ENCODE measurements at regions of chr6 and their contacts with region 1.

Region 1: DNA sequence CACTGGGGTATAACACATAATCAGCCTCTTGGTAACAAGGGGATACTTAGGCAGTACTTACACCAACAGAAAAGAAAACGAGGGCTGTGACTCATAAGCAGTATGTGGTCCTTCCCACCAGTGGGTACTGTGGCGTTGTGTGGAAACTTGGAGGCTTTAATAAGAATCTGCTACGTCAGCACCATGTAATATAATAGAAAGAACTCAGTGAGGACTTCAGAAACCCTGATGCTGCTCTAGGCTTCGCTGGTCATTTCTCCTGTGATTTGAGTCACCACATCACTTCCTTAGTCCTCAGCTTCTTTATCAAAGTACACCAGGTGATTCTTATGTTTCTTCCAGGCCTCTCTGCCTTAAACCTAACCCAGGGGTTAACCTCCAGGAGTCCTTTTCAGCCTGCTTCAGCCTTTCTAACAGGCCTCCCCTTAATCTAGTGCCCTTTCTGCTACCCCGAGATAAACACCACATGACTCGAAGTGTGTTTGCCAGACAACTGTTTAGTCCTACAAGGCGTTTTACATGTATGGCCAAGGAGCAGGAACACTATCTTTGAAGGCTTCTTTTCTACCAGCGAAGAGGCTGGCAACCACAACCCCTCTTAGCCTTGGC is 68.5 kb downstream of the FYN start:
- DNase-seq: peak; percentile 67
- H3K4me3 Mint-ChIP-seq: peak overlapping the region; percentile 74
- H3K27ac Mint-ChIP-seq: peak overlapping the region; percentile 98
- H3K4me1 Mint-ChIP-seq: peaks cover 84% of the 10 kb centered on the region
- H3K27me3 Mint-ChIP-seq: no peaks in the 10 kb centered on the region

Region 2: DNA sequence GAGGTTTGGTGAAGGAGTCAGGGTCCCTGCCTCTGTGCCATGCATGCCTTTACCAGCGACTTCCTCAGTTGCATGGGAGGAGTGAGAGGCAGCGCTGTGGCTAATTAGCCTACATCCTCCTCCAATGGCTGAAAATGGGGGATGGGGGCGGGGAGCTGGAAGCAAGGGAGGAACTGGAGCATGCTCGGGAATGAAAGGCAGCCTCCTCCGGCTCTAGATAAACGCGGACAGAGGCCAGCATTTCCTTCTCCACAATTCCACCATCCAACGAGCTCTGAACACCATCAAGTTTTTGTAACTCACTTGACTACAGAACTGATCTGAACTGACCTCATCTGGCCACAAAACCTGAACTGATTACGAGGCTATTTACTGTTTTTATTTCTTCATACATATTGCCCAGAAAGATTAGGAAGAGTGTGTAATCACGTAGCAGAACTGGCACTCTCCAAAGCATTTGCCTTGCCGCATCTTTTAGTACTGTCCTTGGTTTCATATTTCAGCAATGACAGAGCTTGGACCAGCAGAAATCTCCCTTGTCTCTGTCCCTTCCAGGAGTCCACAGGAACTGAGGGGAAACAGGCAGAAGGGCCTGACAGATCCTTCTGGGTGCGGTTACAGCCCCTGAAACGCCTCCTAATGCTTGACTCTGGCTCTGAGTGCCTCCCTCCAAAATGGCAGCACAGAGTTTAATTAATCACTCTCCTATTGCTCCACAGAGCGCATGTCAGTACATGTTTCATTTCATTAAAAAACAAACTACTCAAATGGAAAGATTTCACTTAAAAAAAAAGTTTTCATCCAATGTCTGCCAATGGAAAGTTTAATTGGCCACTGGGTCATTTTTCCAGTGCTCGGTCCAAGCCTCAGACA is 140.8 kb before region 1 on chr6:
- intact Hi-C with region 1: no loop called
- DNase-seq: no peak
- H3K4me3 Mint-ChIP-seq: no peak overlapping the region
- H3K27ac Mint-ChIP-seq: no peak overlapping the region
- H3K4me1 Mint-ChIP-seq: no peaks in the 10 kb centered on the region
- H3K27me3 Mint-ChIP-seq: no peaks in the 10 kb centered on the region

Region 3: DNA sequence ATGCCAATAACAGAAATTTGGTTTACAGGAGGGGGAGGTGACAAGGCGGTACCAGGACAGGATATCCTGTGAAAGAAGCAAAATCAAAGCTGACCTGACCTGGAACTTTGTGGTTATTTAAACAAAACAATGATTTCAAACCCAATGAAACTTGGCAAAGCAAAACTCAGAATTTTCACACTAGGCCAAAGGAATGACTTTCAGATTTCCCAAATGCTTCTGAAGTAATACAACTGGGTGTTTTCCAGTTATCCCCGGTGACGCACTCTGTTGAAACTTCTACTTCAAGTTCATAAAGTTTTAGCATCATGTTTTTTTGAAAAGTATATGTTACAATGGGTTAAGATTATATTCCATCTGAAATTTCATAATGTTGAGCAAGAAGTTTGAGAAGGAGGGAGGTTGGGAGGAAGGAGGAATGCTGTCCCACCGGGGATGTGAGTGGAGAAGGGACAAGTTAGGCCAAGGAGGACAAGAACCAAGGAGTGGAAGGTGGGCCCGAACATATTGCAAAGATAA is 120.9 kb before region 1 on chr6:
- intact Hi-C with region 1: no loop called
- DNase-seq: no peak
- H3K4me3 Mint-ChIP-seq: no peak overlapping the region
- H3K27ac Mint-ChIP-seq: peak overlapping the region; percentile 68
- H3K4me1 Mint-ChIP-seq: peaks cover 31% of the 10 kb centered on the region
- H3K27me3 Mint-ChIP-seq: no peaks in the 10 kb centered on the region

Region 4: DNA sequence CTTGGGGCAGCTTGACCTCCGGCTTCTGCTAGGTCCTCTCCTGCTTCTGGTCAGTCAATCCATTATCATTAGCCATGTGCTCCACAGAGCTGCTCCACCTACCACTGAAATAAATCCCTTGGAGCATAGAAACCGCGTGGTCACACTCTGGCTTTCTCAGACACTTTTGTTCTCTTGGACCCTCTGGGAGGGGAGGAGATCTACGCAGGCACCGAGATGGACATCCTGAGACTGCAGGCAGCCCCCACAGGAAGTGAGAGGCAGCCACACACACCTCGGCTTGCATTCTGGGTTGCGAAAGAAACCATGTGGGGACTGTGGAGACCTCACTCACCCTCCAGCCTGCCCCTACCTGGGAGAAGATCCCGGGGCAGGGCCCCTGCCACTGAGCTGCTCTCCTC is 11.0 kb before region 1 on chr6:
- intact Hi-C with region 1: loop called (anchors 1 kb)
- DNase-seq: no peak
- H3K4me3 Mint-ChIP-seq: peak overlapping the region; percentile 37
- H3K27ac Mint-ChIP-seq: peak overlapping the region; percentile 75
- H3K4me1 Mint-ChIP-seq: peaks cover 75% of the 10 kb centered on the region
- H3K27me3 Mint-ChIP-seq: no peaks in the 10 kb centered on the region

Region 5: GRCh38 chr6:111846492-111847409 is 42.0 kb after region 1 on chr6:
- intact Hi-C with region 1: loop called (anchors 1 kb)
- DNase-seq: peak; percentile 35
- H3K4me3 Mint-ChIP-seq: peak overlapping the region; percentile 65
- H3K27ac Mint-ChIP-seq: no peak overlapping the region
- H3K4me1 Mint-ChIP-seq: peaks cover 30% of the 10 kb centered on the region
- H3K27me3 Mint-ChIP-seq: no peaks in the 10 kb centered on the region

Region 6: DNA sequence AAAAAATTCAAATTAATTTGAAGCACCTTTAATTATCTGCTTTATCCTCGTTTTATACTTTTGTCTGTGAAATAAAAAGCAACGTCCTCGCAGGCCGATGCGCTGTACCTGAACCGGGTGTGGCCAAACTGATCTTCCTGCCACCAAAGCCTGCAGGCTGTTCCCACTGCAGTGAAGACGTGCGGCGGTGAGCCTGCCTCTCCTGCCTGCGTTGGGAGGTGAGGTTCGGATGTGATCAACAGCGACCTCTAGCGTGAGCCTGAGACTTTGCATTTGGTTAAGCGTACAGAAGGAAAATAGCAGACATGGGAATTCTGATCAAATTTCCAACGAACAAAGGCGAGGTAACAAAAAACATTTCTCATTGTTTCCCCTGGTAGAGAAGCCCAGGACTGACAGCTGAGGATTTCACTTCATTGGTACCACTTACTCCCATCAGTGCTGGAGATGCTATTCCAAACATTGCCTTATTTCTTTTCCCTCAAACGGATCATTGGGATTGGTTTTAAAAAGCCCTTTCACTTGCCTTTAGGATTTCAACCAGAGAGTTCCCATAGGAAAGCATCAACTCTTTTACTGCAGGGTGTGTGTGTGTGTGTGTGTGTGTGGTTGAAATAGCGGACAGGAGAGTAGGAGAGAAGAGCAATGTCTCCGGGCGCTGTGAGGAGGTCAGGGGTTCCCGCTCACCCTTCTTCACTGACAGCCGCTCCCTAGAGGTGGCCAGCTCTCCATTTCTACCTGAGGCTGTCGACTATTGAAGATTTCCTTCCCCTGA is 192.5 kb after region 1 on chr6:
- intact Hi-C with region 1: loop called (anchors 1 kb)
- DNase-seq: peak; percentile 68
- H3K4me3 Mint-ChIP-seq: peak overlapping the region; percentile 45
- H3K27ac Mint-ChIP-seq: peak overlapping the region; percentile 46
- H3K4me1 Mint-ChIP-seq: peaks cover 46% of the 10 kb centered on the region
- H3K27me3 Mint-ChIP-seq: no peaks in the 10 kb centered on the region

Region 7: GRCh38 chr6:112037783-112038216 is 233.1 kb after region 1 on chr6:
- intact Hi-C with region 1: loop called (anchors 1 kb)
- DNase-seq: no peak
- H3K4me3 Mint-ChIP-seq: no peak overlapping the region
- H3K27ac Mint-ChIP-seq: no peak overlapping the region
- H3K4me1 Mint-ChIP-seq: peaks cover 71% of the 10 kb centered on the region
- H3K27me3 Mint-ChIP-seq: no peaks in the 10 kb centered on the region